ENCODE measurements at regions of chrX and their contacts with region 1.

Region 1: DNA sequence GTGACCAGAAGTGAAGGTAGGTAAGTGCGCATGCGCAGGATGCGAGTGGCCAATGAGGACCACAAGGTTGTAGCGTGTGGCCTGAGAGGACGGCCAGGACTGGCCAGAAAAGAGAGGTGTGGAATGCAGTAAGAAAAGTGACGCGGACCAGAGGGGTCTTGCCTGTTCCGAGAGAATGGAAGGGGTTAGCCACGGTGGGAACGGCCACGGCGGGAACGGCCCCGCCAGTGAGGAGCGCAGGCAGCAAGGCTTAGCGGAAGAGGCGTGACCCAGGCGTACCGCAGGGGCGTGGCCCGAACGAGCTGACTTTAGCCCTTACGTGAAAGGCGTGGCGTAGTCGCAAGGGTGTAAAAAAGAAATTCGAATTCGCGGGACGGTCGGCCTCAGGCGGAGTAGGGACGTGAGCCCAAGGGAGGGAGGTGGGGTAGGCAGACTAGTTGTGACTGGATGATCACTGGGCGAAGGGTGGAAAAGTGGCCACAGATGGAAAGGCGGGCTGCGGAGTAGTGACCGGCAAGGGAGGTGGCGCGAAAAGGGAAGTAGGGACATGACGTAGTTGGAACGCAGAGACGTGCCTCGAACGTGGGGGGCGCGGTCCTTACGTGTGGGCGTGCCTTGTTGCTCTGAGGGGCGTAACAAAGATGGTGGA is 10.4 kb upstream of the CLTRN start:
- DNase-seq: peak; percentile 70 to 99 (median 96)
- ATAC-seq: peak; percentile 90
- H3K4me3 ChIP-seq: peak overlapping the region; percentile 87
- H3K4me3 Mint-ChIP-seq: no peak overlapping the region
- H3K27ac ChIP-seq: peak overlapping the region; percentile 96
- H3K27ac Mint-ChIP-seq: no peak overlapping the region
- H3K4me1 ChIP-seq: peaks cover 5 to 11% of the 10 kb centered on the region in 2 donors
- H3K4me1 Mint-ChIP-seq: peaks cover 0 to 17% (median 12%) of the 10 kb centered on the region in 7 donors
- H3K27me3 ChIP-seq: no peaks in the 10 kb centered on the region
- H3K27me3 Mint-ChIP-seq: peaks cover 0 to 5% (median 0%) of the 10 kb centered on the region in 5 donors

Region 2: GRCh38 chrX:14872851-14873675 is 801.9 kb before region 1 on chrX and contains the starts of genes FANCB and MOSPD2:
- CTCF ChIA-PET with region 1: no interaction called
- POLR2A ChIA-PET with region 1: no interaction called
- intact Hi-C with region 1: loop called (anchors 1 kb)
- DNase-seq: peak; percentile 83 to 96 (median 93)
- ATAC-seq: peak; percentile 95
- H3K4me3 ChIP-seq: peak within 1 kb of the TSS; percentile 76
- H3K4me3 Mint-ChIP-seq: peak within 1 kb of the TSS; percentile 82 to 94 (median 88)
- H3K27ac ChIP-seq: peak within 1 kb of the TSS; percentile 76
- H3K27ac Mint-ChIP-seq: peak within 1 kb of the TSS; percentile 75 to 93 (median 88)
- H3K4me1 ChIP-seq: peaks cover 4 to 9% of the 10 kb centered on the region in 2 donors
- H3K4me1 Mint-ChIP-seq: peaks cover 0 to 34% (median 14%) of the 10 kb centered on the region in 7 donors
- H3K27me3 ChIP-seq: no peaks in the 10 kb centered on the region
- H3K27me3 Mint-ChIP-seq: no peaks in the 10 kb centered on the region
- total RNA-seq, gene FANCB: 3.3 to 8.3 (median 4.0) TPM
- total RNA-seq, gene MOSPD2: 7.1 to 15.7 (median 13.4) TPM

Region 3: DNA sequence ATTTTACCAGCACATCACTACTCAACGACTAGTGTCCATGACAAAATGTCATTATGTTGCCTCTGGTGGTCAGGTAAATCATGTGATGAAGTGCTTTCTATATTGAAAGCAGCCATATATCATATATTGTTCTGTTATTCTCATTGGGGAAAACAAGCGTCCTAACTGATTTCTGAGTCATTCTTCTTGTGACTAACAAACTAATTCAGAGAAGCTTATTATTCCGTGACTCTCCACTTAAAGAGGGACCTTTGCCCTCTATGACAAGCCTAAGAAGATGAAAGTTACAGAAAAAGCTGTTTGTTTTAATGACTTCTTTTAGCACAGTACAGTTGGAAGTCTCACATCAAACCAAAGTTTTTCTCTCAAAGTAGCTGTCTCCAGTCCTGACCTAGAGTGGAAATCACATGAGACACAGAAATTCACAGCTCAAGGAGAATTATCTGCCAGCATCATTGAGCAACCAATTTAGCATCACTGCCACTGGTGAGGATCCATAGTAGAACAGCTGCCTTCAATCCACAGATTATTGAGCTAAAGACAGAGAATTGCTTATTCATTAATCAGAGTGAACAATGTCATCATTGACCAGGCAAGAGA is 441.4 kb before region 1 on chrX:
- CTCF ChIA-PET with region 1: no interaction called
- POLR2A ChIA-PET with region 1: no interaction called
- intact Hi-C with region 1: no loop called
- DNase-seq: no peak
- ATAC-seq: no peak
- H3K4me3 ChIP-seq: no peak overlapping the region
- H3K4me3 Mint-ChIP-seq: no peak overlapping the region
- H3K27ac ChIP-seq: no peak overlapping the region
- H3K27ac Mint-ChIP-seq: no peak overlapping the region
- H3K4me1 ChIP-seq: no peaks in the 10 kb centered on the region
- H3K4me1 Mint-ChIP-seq: peaks cover 0 to 2% (median 0%) of the 10 kb centered on the region in 7 donors
- H3K27me3 ChIP-seq: no peaks in the 10 kb centered on the region
- H3K27me3 Mint-ChIP-seq: peaks cover 0 to 6% (median 0%) of the 10 kb centered on the region in 5 donors

Region 4: GRCh38 chrX:15686818-15687685 is 12.1 kb after region 1 on chrX:
- CTCF ChIA-PET with region 1: no interaction called
- POLR2A ChIA-PET with region 1: no interaction called
- intact Hi-C with region 1: loop called in 1 of 2 experiments (anchors 1 kb)
- DNase-seq: peak; percentile 9 to 78 (median 59)
- ATAC-seq: peak; percentile 95
- H3K4me3 ChIP-seq: no peak overlapping the region
- H3K4me3 Mint-ChIP-seq: no peak overlapping the region
- H3K27ac ChIP-seq: no peak overlapping the region
- H3K27ac Mint-ChIP-seq: peak overlapping the region in 7 of 9 donors; percentile 29 to 86 (median 67)
- H3K4me1 ChIP-seq: no peaks in the 10 kb centered on the region
- H3K4me1 Mint-ChIP-seq: peaks cover 0 to 14% (median 13%) of the 10 kb centered on the region in 7 donors
- H3K27me3 ChIP-seq: no peaks in the 10 kb centered on the region
- H3K27me3 Mint-ChIP-seq: no peaks in the 10 kb centered on the region

Region 5: DNA sequence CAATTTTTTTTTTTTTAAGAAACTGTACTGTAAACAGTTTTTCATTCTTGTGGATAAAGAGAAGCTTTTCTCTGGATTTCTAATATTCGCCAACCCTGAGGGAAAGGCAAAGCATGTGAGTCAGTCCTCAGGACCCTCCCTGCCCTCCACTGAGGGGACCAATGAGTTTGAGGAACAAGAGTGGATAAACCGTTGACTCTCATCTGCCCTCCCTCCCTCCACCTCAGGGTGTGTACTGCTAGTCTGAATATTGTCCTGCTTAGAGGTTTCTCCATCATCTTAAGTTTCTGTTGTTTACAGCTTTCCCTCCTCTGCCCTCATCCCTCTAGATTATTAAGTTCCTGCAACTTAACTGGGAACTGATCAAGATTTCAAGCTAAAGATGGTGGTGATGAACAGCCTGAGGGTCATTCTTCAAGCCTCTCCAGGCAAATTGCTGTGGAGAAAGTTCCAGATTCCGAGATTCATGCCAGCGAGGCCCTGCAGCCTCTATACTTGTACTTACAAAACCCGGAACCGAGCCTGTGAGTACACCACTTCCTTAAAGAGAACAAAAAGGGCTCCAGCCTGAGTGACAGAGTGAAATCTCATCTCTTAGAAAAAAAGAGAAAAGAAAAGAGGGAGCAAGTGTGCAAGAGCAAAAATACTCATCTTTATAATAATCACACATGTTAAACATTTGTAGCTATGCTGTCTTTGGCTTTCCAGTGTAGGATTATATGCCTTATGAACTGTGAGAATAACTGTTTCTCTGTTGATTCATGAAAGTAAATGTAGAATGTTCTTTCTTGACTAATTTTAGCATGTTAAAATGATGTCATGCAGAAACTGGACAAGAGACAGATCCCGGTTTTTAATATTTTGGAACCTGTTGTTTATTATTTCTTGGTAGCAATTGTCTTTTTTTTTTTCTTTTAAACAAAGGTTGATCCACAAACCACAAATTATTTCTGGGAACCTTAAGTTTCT is 75.0 kb after region 1 on chrX:
- CTCF ChIA-PET with region 1: no interaction called
- POLR2A ChIA-PET with region 1: interaction called, 4 read pairs
- intact Hi-C with region 1: loop called (anchors 1 kb)
- DNase-seq: peak in 7 of 9 donors; percentile 20 to 61 (median 52)
- ATAC-seq: peak; percentile 55
- H3K4me3 ChIP-seq: peak overlapping the region; percentile 43
- H3K4me3 Mint-ChIP-seq: peak overlapping the region; percentile 60 to 86 (median 77)
- H3K27ac ChIP-seq: peak overlapping the region; percentile 89
- H3K27ac Mint-ChIP-seq: peak overlapping the region; percentile 92 to 99 (median 97)
- H3K4me1 ChIP-seq: peaks cover 51 to 55% of the 10 kb centered on the region in 2 donors
- H3K4me1 Mint-ChIP-seq: peaks cover 36 to 97% (median 82%) of the 10 kb centered on the region in 7 donors
- H3K27me3 ChIP-seq: no peaks in the 10 kb centered on the region
- H3K27me3 Mint-ChIP-seq: no peaks in the 10 kb centered on the region

Region 6: GRCh38 chrX:16719334-16720084 is 1044.5 kb after region 1 on chrX and contains the start of gene SYAP1:
- CTCF ChIA-PET with region 1: no interaction called
- POLR2A ChIA-PET with region 1: interaction called, 3 read pairs
- intact Hi-C with region 1: loop called in 1 of 2 experiments (anchors 1 kb)
- DNase-seq: peak; percentile 85 to 100 (median 96)
- ATAC-seq: peak; percentile 96
- H3K4me3 ChIP-seq: peak within 1 kb of the TSS; percentile 95
- H3K4me3 Mint-ChIP-seq: peak within 1 kb of the TSS; percentile 88 to 98 (median 94)
- H3K27ac ChIP-seq: peak within 1 kb of the TSS; percentile 99
- H3K27ac Mint-ChIP-seq: peak within 1 kb of the TSS; percentile 92 to 100 (median 99)
- H3K4me1 ChIP-seq: peaks cover 0 to 10% of the 10 kb centered on the region in 2 donors
- H3K4me1 Mint-ChIP-seq: peaks cover 2 to 63% (median 39%) of the 10 kb centered on the region in 7 donors
- H3K27me3 ChIP-seq: no peaks in the 10 kb centered on the region
- H3K27me3 Mint-ChIP-seq: no peaks in the 10 kb centered on the region
- total RNA-seq, gene SYAP1: 15.4 to 36.9 (median 15.6) TPM

Region 7: DNA sequence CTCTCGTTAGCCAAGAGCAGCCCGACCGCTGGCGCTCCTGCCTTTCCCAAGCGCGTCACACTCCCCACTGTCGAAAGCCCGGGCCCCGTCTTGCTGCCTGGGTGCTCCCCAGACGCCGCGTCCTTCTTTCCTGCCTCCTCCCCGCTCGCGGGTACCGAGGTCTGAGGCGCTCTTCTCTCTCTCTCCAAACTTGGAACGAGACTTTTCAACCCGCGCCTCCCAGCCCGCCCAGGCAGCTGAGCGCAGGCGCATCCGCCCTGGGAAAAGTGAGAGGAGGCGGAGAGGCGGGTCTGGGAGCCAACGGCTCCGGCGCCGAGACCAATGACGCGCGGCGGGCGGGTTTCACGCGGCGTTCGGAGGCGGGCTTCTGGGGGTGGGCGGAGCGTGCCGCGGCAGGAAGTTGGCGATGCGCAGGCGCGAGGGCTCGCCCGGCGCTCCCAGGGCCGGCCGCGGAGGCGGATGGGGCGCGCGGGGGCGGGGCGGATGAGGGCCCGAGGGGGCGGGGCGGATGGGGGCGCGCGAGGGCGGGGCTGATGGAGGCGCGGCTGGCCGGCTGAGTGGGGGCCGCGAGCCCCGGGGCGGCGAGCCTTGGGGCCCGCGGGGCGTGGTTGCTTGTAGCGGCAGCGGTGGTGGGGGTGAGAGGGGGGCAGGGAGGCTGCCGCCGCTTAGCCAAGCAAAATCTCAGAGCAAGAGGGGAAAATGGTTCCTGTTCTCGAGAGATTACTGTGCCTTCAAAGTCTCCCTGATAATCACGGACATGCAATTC is 1195.3 kb after region 1 on chrX and contains the start of gene RBBP7:
- CTCF ChIA-PET with region 1: no interaction called
- POLR2A ChIA-PET with region 1: interaction called, 3 read pairs
- intact Hi-C with region 1: loop called in 1 of 2 experiments (anchors 1 kb)
- DNase-seq: peak; percentile 88 to 98 (median 94)
- ATAC-seq: peak; percentile 91
- H3K4me3 ChIP-seq: peak within 1 kb of the TSS; percentile 69
- H3K4me3 Mint-ChIP-seq: peak within 1 kb of the TSS; percentile 93 to 99 (median 96)
- H3K27ac ChIP-seq: peak within 1 kb of the TSS; percentile 96
- H3K27ac Mint-ChIP-seq: peak within 1 kb of the TSS; percentile 89 to 98 (median 97)
- H3K4me1 ChIP-seq: peaks cover 0 to 23% of the 10 kb centered on the region in 2 donors
- H3K4me1 Mint-ChIP-seq: peaks cover 7 to 50% (median 39%) of the 10 kb centered on the region in 7 donors
- H3K27me3 ChIP-seq: no peaks in the 10 kb centered on the region
- H3K27me3 Mint-ChIP-seq: peaks cover 0 to 9% (median 0%) of the 10 kb centered on the region in 5 donors
- total RNA-seq, gene RBBP7: 82.9 to 112 (median 94.6) TPM